ENCODE measurements at regions of chr5 and their contacts with region 1.

Region 1: DNA sequence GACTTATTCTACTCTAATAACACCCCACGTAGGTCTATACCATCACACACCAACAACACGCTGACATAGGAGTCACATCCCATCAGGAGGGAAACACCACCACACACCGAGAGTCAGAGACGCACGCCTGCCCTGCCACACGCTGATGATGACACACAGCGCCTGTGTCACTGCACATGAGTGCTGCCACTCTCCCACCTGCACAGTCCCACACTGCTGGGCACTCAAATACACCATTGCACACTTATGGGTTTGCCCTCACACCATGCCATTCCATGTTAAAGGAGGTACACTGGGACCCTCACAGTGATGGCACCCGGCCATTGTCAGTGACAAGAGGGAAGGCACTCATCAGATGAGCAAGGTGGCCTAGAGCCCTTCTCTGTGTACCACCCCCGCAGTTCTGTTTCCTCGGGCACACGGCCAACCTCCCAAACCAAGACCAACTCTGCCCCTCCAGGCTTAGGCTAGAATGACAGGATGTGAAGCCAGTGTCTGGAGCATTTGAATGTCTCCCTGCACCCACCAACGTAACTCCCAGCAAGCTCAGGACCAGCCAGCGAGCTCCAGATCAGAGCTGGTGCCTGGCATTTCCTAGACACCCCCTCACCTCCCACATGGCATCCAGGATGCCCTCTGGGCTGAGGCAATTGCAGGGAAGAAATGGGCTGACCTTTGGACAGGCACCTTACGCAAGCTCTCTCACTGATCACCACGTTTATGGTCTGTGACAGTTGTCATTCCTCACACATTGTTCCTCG is 3.6 kb upstream of the CPLX2 start:
- DNase-seq: peak; percentile 85
- H3K4me3 ChIP-seq: no peak overlapping the region
- H3K27ac ChIP-seq: peak overlapping the region in 1 of 2 experiments; percentile 43; a peak in 2 of 4 replicates
- H3K4me1 ChIP-seq: peaks cover 0 to 21% of the 10 kb centered on the region in 2 experiments; a peak in 1 of 4 replicates
- H3K27me3 ChIP-seq: no peaks in the 10 kb centered on the region
- CTCF ChIP-seq: peak; percentile 22
- EP300 ChIP-seq: peak in 1 of 2 experiments; percentile 15; a peak in 1 of 4 replicates
- RAD21 ChIP-seq: peak; percentile 75

Region 2: DNA sequence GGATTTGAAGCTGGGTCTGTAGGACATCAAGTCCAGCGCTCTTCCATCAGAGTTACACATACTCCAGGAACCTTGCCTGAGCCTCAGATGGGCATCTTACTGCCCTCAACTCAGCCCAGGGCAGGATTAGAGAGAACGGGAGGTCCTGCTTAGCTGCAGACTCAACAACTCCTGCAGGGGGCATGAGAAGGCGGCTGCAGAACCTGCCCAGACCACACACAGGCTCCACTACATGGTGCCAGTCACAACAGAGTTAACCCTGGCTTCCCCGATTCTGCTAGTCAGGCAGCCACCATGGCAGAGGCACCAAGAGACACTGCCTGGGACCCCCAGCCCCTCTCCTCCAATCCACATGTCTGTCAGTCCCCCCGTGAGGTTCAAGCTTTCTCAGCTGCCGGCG is 20.3 kb before region 1 on chr5:
- CTCF ChIA-PET with region 1: interaction called, 11 read pairs
- POLR2A ChIA-PET with region 1: no interaction called
- DNase-seq: no peak
- H3K4me3 ChIP-seq: no peak overlapping the region
- H3K27ac ChIP-seq: no peak overlapping the region
- H3K4me1 ChIP-seq: peaks cover 0 to 14% of the 10 kb centered on the region in 2 experiments; a peak in 1 of 4 replicates
- H3K27me3 ChIP-seq: no peaks in the 10 kb centered on the region
- CTCF ChIP-seq: peak; percentile 27; the same call in 1 of the 2 replicates
- EP300 ChIP-seq: no peak
- RAD21 ChIP-seq: no peak

Region 3: GRCh38 chr5:175853573-175854230 is 14.1 kb before region 1 on chr5:
- CTCF ChIA-PET with region 1: interaction called, 22 read pairs
- POLR2A ChIA-PET with region 1: no interaction called
- DNase-seq: no peak
- H3K4me3 ChIP-seq: no peak overlapping the region
- H3K27ac ChIP-seq: no peak overlapping the region; a peak in 2 of 4 replicates
- H3K4me1 ChIP-seq: peaks cover 0 to 20% of the 10 kb centered on the region in 2 experiments; a peak in 1 of 4 replicates
- H3K27me3 ChIP-seq: no peaks in the 10 kb centered on the region
- CTCF ChIP-seq: no peak
- EP300 ChIP-seq: no peak
- RAD21 ChIP-seq: no peak

Region 4: GRCh38 chr5:175922192-175922885 is 54.6 kb after region 1 on chr5:
- CTCF ChIA-PET with region 1: no interaction called
- POLR2A ChIA-PET with region 1: no interaction called
- DNase-seq: no peak
- H3K4me3 ChIP-seq: no peak overlapping the region
- H3K27ac ChIP-seq: peak overlapping the region in 1 of 2 experiments; percentile 80; a peak in 2 of 4 replicates
- H3K4me1 ChIP-seq: peaks cover 0 to 28% of the 10 kb centered on the region in 2 experiments; a peak in 2 of 4 replicates
- H3K27me3 ChIP-seq: no peaks in the 10 kb centered on the region
- CTCF ChIP-seq: no peak
- EP300 ChIP-seq: peak in 1 of 2 experiments; percentile 90; a peak in 2 of 4 replicates
- RAD21 ChIP-seq: no peak

Region 5: DNA sequence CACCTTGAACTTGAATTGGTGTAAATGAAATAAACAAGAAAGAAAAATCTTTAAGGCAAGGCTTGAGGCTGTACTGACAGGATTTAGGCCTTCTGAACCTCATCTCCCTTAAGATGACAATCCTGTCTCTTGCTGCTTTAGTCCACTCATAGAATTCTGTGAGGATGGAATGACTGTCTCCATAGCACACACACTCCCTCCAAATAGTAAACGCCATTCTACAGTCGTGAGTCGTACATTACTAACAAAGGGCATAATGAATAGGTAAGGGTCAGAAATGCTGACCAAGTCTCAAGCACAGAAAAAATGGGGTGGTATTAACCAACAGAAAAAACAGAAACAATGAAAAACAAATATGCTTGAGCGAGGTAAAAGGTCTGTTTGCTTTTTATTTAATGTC is 298.7 kb after region 1 on chr5:
- CTCF ChIA-PET with region 1: no interaction called
- POLR2A ChIA-PET with region 1: no interaction called
- DNase-seq: no peak
- H3K4me3 ChIP-seq: no peak overlapping the region
- H3K27ac ChIP-seq: peak overlapping the region in 1 of 2 experiments; percentile 7; a peak in 1 of 4 replicates
- H3K4me1 ChIP-seq: peaks cover 0 to 3% of the 10 kb centered on the region in 2 experiments; a peak in 1 of 4 replicates
- H3K27me3 ChIP-seq: no peaks in the 10 kb centered on the region
- CTCF ChIP-seq: no peak
- EP300 ChIP-seq: no peak
- RAD21 ChIP-seq: no peak